ENCODE measurements at regions of chr4 and their contacts with region 1.

Region 1: GRCh38 chr4:168585168-168586091 is 88.6 kb downstream of the PALLD start:
- DNase-seq: peak; percentile 78
- H3K4me3 ChIP-seq: no peak overlapping the region
- H3K27ac ChIP-seq: no peak overlapping the region
- H3K4me1 ChIP-seq: peaks cover 14% of the 10 kb centered on the region
- H3K27me3 ChIP-seq: no peaks in the 10 kb centered on the region
- CTCF ChIP-seq: peak; percentile 58 to 80
- POLR2A ChIP-seq: no peak

Region 2: GRCh38 chr4:168183717-168184608 is 401.5 kb before region 1 on chr4:
- CTCF ChIA-PET with region 1: interaction called, 9 read pairs
- POLR2A ChIA-PET with region 1: no interaction called
- dilution Hi-C with region 1: no loop called
- intact Hi-C with region 1: loop called (anchors 1 kb)
- DNase-seq: peak; percentile 65
- H3K4me3 ChIP-seq: no peak overlapping the region
- H3K27ac ChIP-seq: no peak overlapping the region
- H3K4me1 ChIP-seq: peaks cover 3% of the 10 kb centered on the region
- H3K27me3 ChIP-seq: no peaks in the 10 kb centered on the region
- CTCF ChIP-seq: peak; percentile 18 to 22
- POLR2A ChIP-seq: no peak

Region 3: DNA sequence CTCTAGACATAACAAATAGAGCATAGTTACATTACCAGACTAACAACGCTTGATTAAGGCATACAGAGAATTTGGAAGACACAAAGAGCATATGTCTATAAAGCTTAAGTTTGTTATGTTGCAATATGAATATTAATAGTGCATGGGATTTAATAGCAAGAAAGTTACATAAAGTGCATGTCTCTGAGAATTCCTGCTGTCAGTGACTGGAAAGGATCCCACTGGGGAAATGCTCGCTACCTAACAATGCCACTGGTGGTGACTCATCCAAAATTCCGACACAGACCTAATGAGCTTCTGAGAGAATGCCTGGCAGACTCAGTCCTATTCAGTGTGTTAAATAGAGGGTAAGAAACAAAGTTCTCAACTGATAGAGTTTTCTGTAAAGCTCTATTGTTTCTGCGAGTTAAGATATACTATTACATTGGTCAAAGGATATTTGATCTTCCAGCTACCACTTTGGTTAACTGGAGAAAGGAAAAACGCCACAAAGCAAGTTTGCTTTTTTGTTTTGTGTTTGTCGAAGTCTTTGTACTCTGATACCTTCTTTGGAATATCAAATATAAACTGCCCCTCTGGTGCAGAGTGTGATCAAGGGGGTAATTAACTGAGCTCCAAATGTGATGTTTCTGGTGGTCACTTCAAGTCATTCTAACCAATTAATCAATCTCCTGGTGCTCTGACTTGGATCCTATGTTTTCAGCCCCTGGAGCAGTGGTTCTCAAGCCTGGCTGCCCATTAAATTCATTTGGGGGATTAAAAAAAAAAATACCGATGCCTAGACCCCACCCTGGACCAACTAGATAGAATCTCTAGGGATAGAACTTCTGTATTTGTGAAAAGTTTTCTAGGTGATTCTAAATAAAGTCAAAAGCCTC is 19.3 kb after region 1 on chr4:
- CTCF ChIA-PET with region 1: interaction called, 31 read pairs
- POLR2A ChIA-PET with region 1: no interaction called
- dilution Hi-C with region 1: no loop called
- intact Hi-C with region 1: no loop called
- DNase-seq: peak; percentile 96
- H3K4me3 ChIP-seq: no peak overlapping the region
- H3K27ac ChIP-seq: peak overlapping the region; percentile 64
- H3K4me1 ChIP-seq: peaks cover 25% of the 10 kb centered on the region
- H3K27me3 ChIP-seq: no peaks in the 10 kb centered on the region
- CTCF ChIP-seq: no peak
- POLR2A ChIP-seq: peak; percentile 22

Region 4: DNA sequence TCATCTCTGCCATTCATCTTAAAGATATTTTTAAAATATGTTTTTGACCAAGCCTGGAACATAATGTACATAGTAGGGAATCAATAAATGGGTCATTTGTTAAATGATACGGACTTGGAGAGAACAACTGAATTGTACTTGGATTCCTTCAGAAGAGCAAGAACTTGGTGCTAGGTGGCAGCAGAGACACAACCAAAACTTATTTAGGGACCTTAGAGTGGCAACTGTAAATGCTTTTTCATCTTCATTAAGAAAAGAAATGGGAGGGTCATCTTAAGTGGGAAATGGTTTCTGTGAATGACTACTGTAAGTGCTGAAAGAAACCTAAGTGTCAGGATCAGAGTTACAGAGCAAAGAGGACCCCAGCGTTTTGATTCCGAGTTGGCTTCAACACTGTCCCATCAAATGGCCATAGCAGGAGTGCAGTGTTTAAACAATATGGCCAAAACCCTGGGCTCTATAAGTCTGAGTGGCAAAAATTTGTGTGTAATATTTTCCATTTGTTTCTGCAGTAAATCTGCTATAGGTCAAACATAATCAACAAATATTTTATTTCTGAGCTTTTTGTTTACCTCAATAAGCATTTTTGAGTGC is 125.0 kb after region 1 on chr4:
- CTCF ChIA-PET with region 1: interaction called, 25 read pairs
- POLR2A ChIA-PET with region 1: no interaction called
- dilution Hi-C with region 1: no loop called
- intact Hi-C with region 1: loop called (anchors 1 kb)
- DNase-seq: peak; percentile 82
- H3K4me3 ChIP-seq: no peak overlapping the region
- H3K27ac ChIP-seq: no peak overlapping the region
- H3K4me1 ChIP-seq: peaks cover 12% of the 10 kb centered on the region
- H3K27me3 ChIP-seq: no peaks in the 10 kb centered on the region
- CTCF ChIP-seq: peak; percentile 36 to 48
- POLR2A ChIP-seq: no peak

Region 5: DNA sequence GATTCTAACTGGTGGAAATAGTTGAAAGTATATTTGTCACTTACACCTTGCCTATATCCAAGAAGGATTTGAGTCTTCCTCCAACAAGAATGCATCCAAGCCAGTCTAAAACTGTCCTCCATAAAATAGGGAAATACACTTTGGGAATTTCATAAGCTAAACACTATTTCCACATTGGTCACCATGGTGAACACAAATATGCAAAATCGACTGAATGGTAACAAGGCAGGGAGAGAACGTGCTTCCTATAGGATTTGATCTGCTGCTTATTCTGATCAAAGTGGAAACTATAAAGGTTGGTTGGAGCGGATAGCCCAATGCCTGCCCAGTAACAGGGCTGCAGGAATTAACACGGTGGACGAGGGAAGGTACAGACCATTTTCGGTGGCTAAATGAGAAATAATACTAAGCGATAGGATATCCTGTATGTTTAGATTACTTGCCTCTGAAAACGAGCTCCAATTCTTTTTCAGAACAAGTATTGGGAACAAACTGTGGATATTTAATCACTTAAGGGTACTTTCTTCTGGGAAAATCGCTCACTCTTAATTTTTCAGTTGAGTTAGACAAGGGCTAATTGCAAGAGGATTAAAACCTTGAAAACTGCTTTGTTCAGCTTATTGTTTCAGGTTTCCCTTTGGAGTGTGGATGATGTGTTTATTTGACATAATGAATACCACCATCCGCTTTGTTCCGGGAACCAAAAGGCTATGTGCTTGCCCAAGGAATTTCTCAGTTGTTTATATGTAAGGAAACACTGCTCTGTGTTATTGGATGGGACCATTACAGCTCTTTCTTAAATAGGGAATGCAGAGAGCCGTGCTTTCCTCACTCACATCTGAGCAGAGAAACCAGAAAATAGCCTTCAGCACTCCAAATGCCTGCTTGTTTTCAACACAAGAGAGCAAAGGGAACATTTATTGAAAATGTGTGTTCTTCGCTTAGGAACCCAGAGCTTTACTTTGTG is 230.2 kb after region 1 on chr4:
- CTCF ChIA-PET with region 1: interaction called, 10 read pairs
- POLR2A ChIA-PET with region 1: no interaction called
- dilution Hi-C with region 1: no loop called
- intact Hi-C with region 1: loop called (anchors 5 kb)
- DNase-seq: peak; percentile 75
- H3K4me3 ChIP-seq: no peak overlapping the region
- H3K27ac ChIP-seq: no peak overlapping the region
- H3K4me1 ChIP-seq: peaks cover 6% of the 10 kb centered on the region
- H3K27me3 ChIP-seq: no peaks in the 10 kb centered on the region
- CTCF ChIP-seq: no peak
- POLR2A ChIP-seq: no peak

Region 6: DNA sequence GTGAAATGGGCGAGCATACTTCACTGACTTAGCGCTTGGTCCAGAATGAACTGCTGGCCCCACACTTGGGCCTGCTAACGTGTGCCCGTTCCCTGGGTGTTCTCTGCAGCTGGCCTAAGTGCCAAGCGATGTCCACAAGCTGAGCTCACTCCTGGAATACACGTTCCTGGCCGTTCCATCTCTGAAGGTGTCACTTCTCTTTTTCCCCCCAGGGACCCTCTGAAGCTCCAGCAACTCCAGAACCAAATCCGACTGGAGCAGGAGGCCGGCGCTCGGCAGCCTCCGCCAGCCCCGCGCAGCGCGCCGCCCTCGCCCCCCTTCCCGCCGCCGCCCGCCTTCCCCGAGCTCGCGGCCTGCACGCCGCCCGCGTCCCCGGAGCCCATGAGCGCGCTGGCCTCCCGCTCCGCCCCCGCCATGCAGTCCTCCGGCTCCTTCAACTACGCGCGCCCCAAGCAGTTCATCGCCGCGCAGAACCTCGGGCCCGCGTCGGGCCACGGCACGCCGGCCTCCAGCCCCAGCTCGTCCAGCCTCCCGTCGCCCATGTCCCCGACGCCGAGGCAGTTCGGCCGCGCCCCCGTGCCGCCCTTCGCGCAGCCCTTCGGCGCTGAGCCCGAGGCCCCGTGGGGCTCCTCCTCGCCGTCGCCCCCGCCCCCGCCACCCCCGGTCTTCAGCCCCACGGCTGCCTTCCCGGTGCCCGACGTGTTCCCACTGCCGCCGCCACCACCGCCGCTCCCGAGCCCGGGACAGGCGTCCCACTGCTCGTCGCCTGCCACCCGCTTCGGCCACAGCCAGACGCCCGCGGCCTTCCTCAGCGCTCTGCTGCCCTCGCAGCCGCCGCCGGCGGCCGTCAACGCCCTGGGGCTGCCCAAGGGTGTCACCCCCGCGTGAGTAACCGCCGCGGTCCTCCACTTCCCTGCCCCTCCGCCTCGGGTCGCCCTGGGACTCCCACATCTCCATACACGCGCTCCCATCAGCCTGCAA is 292.4 kb after region 1 on chr4:
- CTCF ChIA-PET with region 1: no interaction called
- POLR2A ChIA-PET with region 1: no interaction called
- dilution Hi-C with region 1: no loop called
- intact Hi-C with region 1: loop called (anchors 5 kb)
- DNase-seq: peak; percentile 42
- H3K4me3 ChIP-seq: peak overlapping the region in 2 of 3 experiments; percentile 23 to 37
- H3K27ac ChIP-seq: no peak overlapping the region
- H3K4me1 ChIP-seq: peaks cover 4% of the 10 kb centered on the region
- H3K27me3 ChIP-seq: no peaks in the 10 kb centered on the region
- CTCF ChIP-seq: no peak
- POLR2A ChIP-seq: no peak

Region 7: DNA sequence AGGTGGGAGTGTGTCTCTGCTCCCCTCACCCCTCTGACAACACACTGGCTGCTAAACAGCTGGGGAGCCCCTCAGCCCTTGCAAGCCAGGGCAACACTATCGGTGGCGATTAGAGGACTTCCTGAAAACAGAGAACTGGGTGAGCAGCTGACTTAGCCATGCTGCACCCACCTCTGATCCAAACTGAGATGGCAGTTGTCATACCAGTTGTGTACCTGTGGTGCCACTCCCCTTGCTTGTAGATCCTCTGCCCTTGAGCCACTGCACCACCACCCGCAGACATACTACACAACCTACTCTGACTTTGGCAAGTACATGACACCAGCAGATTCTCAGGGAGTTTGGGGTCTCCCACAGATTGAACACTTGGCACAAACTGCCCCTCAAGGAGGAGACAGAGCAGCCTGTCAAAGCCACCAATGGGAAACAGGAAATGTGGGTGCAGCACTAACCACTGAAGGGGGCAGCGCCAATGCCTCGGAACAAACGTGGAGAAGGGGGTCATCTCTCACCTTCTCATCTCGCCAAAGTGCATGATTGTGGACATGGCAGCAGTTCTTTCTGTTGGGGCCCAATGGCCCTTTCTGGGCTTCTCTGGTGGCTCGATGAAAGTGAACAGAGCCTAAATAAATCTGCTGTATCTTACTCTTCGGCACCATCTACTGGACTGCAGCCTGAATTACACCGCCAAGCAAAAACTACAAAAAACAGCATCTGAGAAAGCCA is 907.2 kb after region 1 on chr4:
- CTCF ChIA-PET with region 1: no interaction called
- POLR2A ChIA-PET with region 1: no interaction called
- dilution Hi-C with region 1: no loop called
- intact Hi-C with region 1: loop called (anchors 5 kb)
- DNase-seq: peak; percentile 52
- H3K4me3 ChIP-seq: no peak overlapping the region
- H3K27ac ChIP-seq: no peak overlapping the region
- H3K4me1 ChIP-seq: no peaks in the 10 kb centered on the region
- H3K27me3 ChIP-seq: no peaks in the 10 kb centered on the region
- CTCF ChIP-seq: peak; percentile 70 to 72
- POLR2A ChIP-seq: no peak

Measured in endothelial cell of umbilical vein (primary cell).